ENCODE measurements at regions of chr5 and their contacts with region 1.

Region 1: GRCh38 chr5:169583424-169584204 is at the start of gene SPDL1:
- DNase-seq: peak; percentile 97
- H3K4me3 Mint-ChIP-seq: peak within 1 kb of the TSS; percentile 98
- H3K27ac Mint-ChIP-seq: peak within 1 kb of the TSS; percentile 84
- H3K4me1 Mint-ChIP-seq: peaks cover 31% of the 10 kb centered on the region
- H3K27me3 Mint-ChIP-seq: no peaks in the 10 kb centered on the region
- total RNA-seq, gene SPDL1: 32.7 to 34.9 TPM

Region 2: DNA sequence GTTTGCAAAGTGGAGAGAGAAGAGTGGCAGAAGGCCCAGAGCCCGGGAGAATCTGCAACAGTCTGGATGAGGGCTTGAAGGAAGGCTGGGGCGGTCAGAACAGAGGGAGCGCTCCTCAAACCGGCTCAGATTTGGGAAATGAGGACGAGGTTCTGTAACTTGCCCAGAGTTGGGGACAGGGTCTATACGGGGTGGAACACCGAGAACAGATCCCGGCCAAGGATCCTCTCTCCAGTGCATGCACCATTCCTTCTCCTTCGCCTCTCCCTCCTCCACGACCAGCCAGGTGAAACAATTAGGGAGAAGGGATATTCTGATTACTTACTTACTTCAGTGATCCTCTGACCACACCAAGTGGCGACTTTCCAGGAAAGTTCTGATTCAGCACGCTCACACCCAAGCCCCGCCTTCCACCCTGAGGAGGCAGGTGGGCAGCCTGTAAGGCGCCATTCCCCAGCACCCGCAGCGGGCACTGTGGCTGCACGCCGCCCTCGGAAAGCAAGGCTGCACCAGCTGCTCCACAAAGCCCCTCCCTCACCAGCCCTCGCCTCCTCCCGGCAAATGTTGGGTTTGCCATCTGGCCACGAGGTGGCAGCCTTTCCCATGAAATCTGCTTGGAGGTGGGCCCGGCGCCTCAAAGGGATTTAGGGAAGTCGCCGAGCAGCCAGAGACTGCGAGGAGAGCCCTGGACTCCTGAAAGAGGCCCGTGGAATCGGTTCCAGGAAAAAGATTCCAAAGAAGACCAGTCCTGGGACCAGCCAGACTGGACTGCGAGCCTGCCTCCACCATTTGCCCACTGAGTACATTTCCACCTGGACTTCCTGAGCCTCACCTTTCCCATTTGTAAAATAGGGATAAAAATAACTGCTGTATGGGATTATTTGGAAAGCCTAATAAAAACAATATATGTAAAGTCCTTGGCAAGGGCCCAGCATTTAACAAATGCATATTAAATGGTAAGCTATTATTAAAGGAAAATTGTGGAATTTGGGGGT is 1314.4 kb before region 1 on chr5:
- CTCF ChIA-PET with region 1: no interaction called
- POLR2A ChIA-PET with region 1: no interaction called
- intact Hi-C with region 1: loop called (anchors 2 kb)
- DNase-seq: peak; percentile 84
- H3K4me3 Mint-ChIP-seq: peak overlapping the region; percentile 28
- H3K27ac Mint-ChIP-seq: no peak overlapping the region
- H3K4me1 Mint-ChIP-seq: peaks cover 18% of the 10 kb centered on the region
- H3K27me3 Mint-ChIP-seq: peaks cover 9% of the 10 kb centered on the region

Region 3: GRCh38 chr5:168679515-168679920 is 904.1 kb before region 1 on chr5:
- CTCF ChIA-PET with region 1: interaction called, 6 read pairs
- POLR2A ChIA-PET with region 1: no interaction called
- intact Hi-C with region 1: loop called (anchors 1 kb)
- DNase-seq: peak; percentile 75
- H3K4me3 Mint-ChIP-seq: no peak overlapping the region
- H3K27ac Mint-ChIP-seq: no peak overlapping the region
- H3K4me1 Mint-ChIP-seq: peaks cover 11% of the 10 kb centered on the region
- H3K27me3 Mint-ChIP-seq: no peaks in the 10 kb centered on the region

Region 4: DNA sequence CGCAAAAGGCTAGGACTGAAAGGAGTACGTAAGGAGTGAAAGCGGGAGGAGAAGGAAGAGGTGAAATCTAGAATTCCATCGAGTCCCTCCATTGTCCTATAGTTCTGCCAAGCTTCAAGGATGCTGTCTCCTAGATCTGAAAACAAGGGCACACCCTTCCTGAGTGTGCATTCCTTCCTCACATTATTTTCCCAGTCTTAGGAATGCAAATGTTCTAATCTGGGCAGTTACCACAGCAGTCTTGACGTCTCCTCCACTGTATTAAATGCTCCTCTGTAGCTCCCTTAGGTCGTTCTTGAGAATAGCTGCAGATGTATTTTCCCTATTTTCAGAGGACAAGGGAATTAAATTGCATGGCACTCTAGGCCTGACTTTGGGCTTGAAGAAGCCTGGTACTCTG is 410.2 kb before region 1 on chr5:
- CTCF ChIA-PET with region 1: no interaction called
- POLR2A ChIA-PET with region 1: no interaction called
- intact Hi-C with region 1: no loop called
- DNase-seq: no peak
- H3K4me3 Mint-ChIP-seq: no peak overlapping the region
- H3K27ac Mint-ChIP-seq: no peak overlapping the region
- H3K4me1 Mint-ChIP-seq: no peaks in the 10 kb centered on the region
- H3K27me3 Mint-ChIP-seq: no peaks in the 10 kb centered on the region

Region 5: GRCh38 chr5:169302491-169303118 is 281.0 kb before region 1 on chr5:
- CTCF ChIA-PET with region 1: no interaction called
- POLR2A ChIA-PET with region 1: no interaction called
- intact Hi-C with region 1: loop called (anchors 1 kb)
- DNase-seq: peak; percentile 72
- H3K4me3 Mint-ChIP-seq: no peak overlapping the region
- H3K27ac Mint-ChIP-seq: no peak overlapping the region
- H3K4me1 Mint-ChIP-seq: peaks cover 14% of the 10 kb centered on the region
- H3K27me3 Mint-ChIP-seq: peaks cover 56% of the 10 kb centered on the region

Region 6: DNA sequence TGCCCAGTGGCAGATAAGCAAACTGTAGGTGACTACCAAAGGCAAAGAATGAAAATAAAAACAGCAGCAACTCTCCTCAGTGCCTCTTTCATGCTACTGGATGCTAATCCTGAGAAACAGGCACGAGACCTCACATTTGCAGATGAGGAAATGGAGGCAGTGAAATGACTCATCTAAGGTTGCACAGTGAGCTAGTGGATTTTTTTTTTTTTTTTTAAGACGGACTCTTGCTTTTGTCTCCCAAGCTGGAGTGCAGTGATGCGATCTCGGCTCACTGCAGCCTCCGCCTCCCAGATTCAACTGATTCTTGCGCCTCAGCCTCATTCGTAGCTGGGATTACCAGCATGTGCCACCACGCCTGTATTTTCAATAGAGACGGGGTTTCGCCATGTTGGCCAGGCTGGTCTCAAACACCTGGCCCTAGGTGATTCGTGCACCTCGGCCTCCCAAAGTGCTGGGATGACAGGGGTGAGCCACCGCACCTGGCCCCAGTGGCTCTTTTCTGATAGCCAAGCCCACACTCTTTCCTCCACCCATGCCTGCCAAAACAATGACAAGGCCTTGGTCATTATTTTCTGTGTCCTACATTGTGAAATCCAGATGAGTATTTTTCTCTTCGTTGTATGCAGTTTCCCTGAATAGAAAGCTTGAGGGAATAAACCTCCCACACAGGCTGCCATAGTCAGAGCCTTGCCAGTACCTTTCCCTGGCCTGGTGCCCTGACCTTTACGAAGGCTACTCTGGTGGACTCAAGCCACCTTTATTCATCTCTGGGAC is 72.7 kb after region 1 on chr5:
- CTCF ChIA-PET with region 1: interaction called, 3 read pairs
- POLR2A ChIA-PET with region 1: no interaction called
- intact Hi-C with region 1: loop called (anchors 2 kb)
- DNase-seq: peak; percentile 51
- H3K4me3 Mint-ChIP-seq: peak overlapping the region; percentile 29
- H3K27ac Mint-ChIP-seq: peak overlapping the region; percentile 78
- H3K4me1 Mint-ChIP-seq: peaks cover 69% of the 10 kb centered on the region
- H3K27me3 Mint-ChIP-seq: no peaks in the 10 kb centered on the region

Region 7: DNA sequence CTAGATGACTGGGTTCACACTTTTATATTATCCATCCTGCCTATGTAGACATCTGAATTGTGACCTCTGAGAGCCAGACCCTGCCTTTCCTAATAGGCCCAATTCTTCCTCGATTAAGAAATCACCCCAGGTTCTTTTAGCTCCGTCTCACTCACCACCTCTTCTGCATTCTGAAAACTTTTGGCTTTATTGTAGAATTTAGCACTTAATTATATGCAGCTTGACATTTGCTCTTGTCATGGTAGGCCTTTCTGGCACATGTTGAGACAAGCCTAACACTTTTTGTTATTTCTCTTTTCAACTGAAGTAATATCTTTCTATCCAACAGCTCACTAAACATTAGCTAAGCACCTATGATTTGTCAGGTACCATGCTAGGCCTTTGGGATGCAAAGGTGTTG is 233.4 kb after region 1 on chr5:
- CTCF ChIA-PET with region 1: no interaction called
- POLR2A ChIA-PET with region 1: no interaction called
- intact Hi-C with region 1: no loop called
- DNase-seq: no peak
- H3K4me3 Mint-ChIP-seq: no peak overlapping the region
- H3K27ac Mint-ChIP-seq: no peak overlapping the region
- H3K4me1 Mint-ChIP-seq: no peaks in the 10 kb centered on the region
- H3K27me3 Mint-ChIP-seq: no peaks in the 10 kb centered on the region

Region 8: GRCh38 chr5:171387345-171387969 is 1803.8 kb after region 1 on chr5 and contains the start of gene NPM1:
- CTCF ChIA-PET with region 1: no interaction called
- POLR2A ChIA-PET with region 1: no interaction called
- intact Hi-C with region 1: loop called (anchors 5 kb)
- DNase-seq: peak; percentile 98
- H3K4me3 Mint-ChIP-seq: peak within 1 kb of the TSS; percentile 93
- H3K27ac Mint-ChIP-seq: peak within 1 kb of the TSS; percentile 96
- H3K4me1 Mint-ChIP-seq: peaks cover 39% of the 10 kb centered on the region
- H3K27me3 Mint-ChIP-seq: peaks cover 3% of the 10 kb centered on the region
- total RNA-seq, gene NPM1: 2,483 to 2,592 TPM

Measured in activated CD4-positive, alpha-beta memory T cell treated with anti-CD3 and anti-CD28 coated beads for 36 hours (primary cell).